Gastrocnemius medialis (tissue), 4 donors: ENCODE measurements at regions of chr6 and their contacts with region 1.

Region 1: GRCh38 chr6:133309579-133309978 is 68.4 kb downstream of the EYA4 start:
- DNase-seq: no peak
- ATAC-seq: peak; percentile 93 to 94
- H3K4me3 ChIP-seq: peak overlapping the region in 1 of 4 donors; percentile 1
- H3K27ac ChIP-seq: peak overlapping the region; percentile 6 to 77 (median 48)
- H3K4me1 ChIP-seq: peaks cover 43 to 45% of the 10 kb centered on the region in 2 donors
- H3K27me3 ChIP-seq: no peaks in the 10 kb centered on the region
- CTCF ChIP-seq: no peak
- POLR2A ChIP-seq: no peak

Region 2: DNA sequence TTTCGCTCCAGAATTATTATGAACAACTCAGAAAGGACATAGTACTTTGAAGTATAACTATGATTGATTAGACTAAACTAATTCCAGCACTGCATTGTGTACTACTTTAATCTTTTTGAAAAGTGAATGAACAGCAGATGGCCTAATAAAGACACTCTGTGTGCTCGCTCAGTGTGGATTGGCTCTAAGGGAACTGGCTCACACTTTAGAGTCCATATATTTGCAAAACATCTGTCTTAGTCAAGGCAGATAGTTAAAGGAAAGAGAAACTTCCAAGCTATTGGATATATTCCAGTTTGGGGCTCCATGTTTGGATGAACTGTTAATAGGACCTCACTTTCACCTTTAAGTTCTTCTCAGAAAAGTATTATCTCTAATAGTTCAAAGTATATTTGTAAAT is 150.5 kb after region 1 on chr6:
- in situ Hi-C with region 1: no loop called
- intact Hi-C with region 1: loop called (anchors 1 kb)
- DNase-seq: no peak
- ATAC-seq: no peak
- H3K4me3 ChIP-seq: no peak overlapping the region
- H3K27ac ChIP-seq: no peak overlapping the region
- H3K4me1 ChIP-seq: peaks cover 0 to 5% of the 10 kb centered on the region in 2 donors
- H3K27me3 ChIP-seq: no peaks in the 10 kb centered on the region
- CTCF ChIP-seq: no peak
- POLR2A ChIP-seq: no peak